Lower leg skin (tissue), 4 donors: ENCODE measurements at regions of chr16 and their contacts with region 1.

Region 1: DNA sequence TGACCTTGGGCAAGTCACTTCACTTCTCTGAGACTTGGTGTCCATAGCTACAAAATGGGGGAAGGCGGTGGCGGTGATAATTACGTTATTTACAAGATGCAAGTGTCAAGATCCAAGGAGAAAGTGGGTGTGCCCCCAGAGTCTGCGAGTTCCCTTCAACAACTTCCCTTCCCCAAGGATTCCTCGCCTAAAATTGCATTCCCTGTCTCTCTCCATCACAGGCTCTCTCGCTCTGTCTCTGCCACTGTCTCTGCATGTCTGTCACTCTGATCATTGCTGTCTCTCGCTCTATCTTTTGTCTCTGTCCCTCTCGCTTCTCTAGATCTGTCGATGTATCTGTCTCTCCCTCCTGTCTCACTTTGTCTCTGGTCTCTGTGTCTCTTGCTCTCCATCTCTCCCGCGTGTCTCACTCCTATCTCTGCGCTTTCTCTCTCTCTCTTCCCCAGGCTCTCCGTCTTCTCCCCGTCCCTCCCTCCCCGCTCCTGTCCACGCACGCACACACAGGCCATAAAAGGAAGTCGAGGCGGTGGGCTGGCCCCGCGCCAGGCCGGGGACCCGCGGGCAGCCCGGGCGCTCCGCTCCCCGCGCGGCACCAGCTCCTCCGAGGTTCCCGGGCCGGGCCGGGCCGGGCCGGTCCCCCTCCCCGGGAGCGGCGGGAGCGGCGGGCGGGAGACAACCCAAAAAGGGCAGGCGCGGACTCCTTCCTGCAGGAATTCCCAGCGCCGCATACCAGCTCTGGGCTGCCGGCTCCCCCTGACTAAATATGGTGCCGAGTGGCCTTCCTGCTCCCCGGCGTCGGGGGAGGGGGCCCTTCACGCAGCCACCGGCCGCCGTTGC is 1.1 kb upstream of the MYH11 start:
- DNase-seq: peak in 1 of 2 donors; percentile 87
- H3K4me3 ChIP-seq: no peak overlapping the region
- CTCF ChIP-seq: no peak
- POLR2A ChIP-seq: no peak

Region 2: DNA sequence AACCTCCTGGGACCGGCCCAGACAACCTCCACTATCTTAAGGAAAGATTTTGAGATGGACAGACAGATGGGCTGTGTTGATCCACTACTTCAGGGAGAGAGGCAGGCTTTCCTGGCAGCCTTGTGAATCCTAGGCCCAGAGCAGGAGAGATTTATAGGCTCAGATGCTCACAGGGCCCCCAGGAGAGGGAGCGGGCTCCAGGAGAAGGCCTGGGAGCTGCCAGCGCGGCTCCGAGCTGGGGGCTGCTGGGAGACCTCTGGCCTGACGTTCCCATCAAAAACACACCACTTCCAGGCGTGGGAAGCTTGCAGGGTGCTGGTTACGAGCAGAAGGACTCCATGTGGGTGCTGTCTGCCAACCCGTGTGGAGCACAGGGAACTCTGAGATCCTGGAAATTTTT is 54.3 kb before region 1 on chr16:
- intact Hi-C with region 1: no loop called
- DNase-seq: no peak
- H3K4me3 ChIP-seq: no peak overlapping the region
- CTCF ChIP-seq: no peak
- POLR2A ChIP-seq: no peak

Region 3: DNA sequence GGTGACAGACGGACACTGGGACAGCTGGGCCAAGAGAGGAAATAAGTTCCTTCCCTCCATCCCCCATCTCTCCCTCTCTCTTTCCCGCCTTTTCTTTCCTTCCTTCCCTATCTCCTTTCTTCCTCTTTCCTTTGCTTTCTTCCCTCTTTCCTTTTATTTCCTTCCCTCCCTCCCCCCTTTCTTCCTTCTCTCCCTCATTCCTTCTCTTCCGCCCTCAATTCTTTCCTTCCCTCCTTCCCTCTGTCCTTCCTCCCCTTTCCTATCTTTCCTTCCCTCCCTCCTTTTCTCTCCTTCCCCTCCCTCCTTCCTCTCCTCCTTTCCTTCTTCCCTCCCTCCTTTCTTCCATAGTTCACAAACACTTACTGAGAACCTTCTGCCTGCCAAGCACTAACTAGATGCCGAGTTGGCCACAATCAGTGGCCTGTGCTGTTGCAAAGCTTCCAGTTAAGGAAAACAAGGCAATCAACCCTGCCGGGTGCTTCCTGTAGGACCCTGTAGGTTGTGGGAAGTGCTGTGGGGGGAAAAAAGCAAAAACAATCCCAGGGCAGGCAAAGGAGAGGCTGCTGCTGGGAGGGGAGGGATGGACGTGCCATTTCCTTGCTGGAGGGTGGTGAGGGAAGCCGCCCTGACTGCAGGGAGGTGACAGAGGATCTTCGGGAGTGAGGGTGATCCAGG is 333.7 kb after region 1 on chr16:
- intact Hi-C with region 1: loop called (anchors 10 kb)
- DNase-seq: no peak
- H3K4me3 ChIP-seq: no peak overlapping the region
- CTCF ChIP-seq: no peak
- POLR2A ChIP-seq: no peak